HEK293 (cell line): ENCODE measurements at regions of chr22 and their contacts with region 1.

Region 1: GRCh38 chr22:49724893-49725474 is 102.7 kb downstream of the BRD1 start:
- H3K4me3 ChIP-seq: peak overlapping the region; percentile 28
- H3K27ac ChIP-seq: no peak overlapping the region
- H3K4me1 ChIP-seq: no peaks in the 10 kb centered on the region
- CTCF ChIP-seq: peak; percentile 87

Region 2: GRCh38 chr22:49633010-49633324 is 92.0 kb before region 1 on chr22:
- CTCF ChIA-PET with region 1: interaction called, 10 read pairs
- POLR2A ChIA-PET with region 1: no interaction called
- H3K4me3 ChIP-seq: no peak overlapping the region
- H3K27ac ChIP-seq: no peak overlapping the region
- H3K4me1 ChIP-seq: no peaks in the 10 kb centered on the region
- CTCF ChIP-seq: no peak

Region 3: GRCh38 chr22:49970528-49971231 is 245.7 kb after region 1 on chr22:
- CTCF ChIA-PET with region 1: no interaction called
- POLR2A ChIA-PET with region 1: no interaction called
- H3K4me3 ChIP-seq: peak overlapping the region; percentile 25
- H3K27ac ChIP-seq: peak overlapping the region; percentile 61
- H3K4me1 ChIP-seq: peaks cover 3% of the 10 kb centered on the region; the same call in 1 of the 2 replicates
- CTCF ChIP-seq: no peak; the same call in 1 of the 2 replicates